B cell (primary cell): ENCODE measurements at regions of chr1 and their contacts with region 1.

Region 1: DNA sequence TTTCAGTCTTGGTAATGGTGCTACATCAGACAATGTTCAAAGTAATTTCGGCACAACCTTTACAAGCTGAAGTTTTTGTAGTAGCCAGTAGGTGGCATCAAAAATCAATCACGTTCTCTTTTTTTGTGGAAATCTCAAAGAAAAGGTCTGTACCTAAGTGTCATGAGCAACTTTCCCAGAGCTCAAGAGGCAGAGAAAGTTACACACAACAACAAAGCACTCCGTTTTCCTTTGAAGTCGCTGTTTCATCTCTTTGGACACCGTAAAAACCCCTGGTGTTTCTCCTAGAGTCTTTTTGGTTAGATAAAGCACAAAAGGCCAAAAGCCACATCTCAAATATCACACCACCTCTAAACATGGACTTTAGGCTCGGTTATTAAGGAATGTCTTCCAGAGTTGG is 131.6 kb downstream of the LHX8 start:
- DNase-seq: peak; percentile 51
- ATAC-seq: peak; percentile 69
- H3K4me3 ChIP-seq: no peak overlapping the region
- H3K4me3 Mint-ChIP-seq: no peak overlapping the region
- H3K27ac ChIP-seq: no peak overlapping the region
- H3K27ac Mint-ChIP-seq: no peak overlapping the region
- H3K4me1 ChIP-seq: peaks cover 11 to 14% of the 10 kb centered on the region in 2 donors
- H3K4me1 Mint-ChIP-seq: peaks cover 24% of the 10 kb centered on the region
- H3K27me3 ChIP-seq: no peaks in the 10 kb centered on the region
- H3K27me3 Mint-ChIP-seq: no peaks in the 10 kb centered on the region
- CTCF ChIP-seq: peak; percentile 75

Region 2: DNA sequence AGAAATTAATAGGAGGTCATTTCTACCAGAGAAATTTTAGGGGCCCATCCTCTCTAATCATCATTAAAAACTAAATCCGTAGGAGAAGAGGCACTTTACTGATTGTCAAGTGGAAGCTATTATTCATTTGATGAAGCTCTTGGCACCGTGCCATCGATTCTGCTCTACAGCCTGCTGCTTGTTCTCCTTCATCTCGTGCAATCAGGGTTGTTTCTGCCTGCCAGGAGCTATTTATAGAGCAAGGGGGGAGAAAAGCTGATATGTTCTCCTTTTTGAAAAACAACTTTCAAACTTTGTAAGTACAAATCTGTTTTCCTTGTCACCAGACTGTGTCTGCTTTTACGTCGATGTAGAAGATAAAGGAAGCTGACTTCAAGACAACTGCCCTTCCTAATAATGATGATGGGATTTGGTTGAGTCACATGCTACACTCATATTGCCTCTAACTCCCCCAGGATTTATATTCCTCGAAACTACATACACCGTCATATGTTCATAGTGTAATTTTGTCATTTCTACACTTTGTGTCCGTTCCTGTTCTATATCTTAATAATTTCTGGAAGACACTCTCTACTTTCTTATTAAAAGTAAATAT is 301.2 kb before region 1 on chr1:
- CTCF ChIA-PET with region 1: no interaction called
- POLR2A ChIA-PET with region 1: no interaction called
- intact Hi-C with region 1: no loop called
- DNase-seq: no peak
- ATAC-seq: no peak
- H3K4me3 ChIP-seq: no peak overlapping the region
- H3K4me3 Mint-ChIP-seq: no peak overlapping the region
- H3K27ac ChIP-seq: no peak overlapping the region
- H3K27ac Mint-ChIP-seq: no peak overlapping the region
- H3K4me1 ChIP-seq: no peaks in the 10 kb centered on the region
- H3K4me1 Mint-ChIP-seq: no peaks in the 10 kb centered on the region
- H3K27me3 ChIP-seq: no peaks in the 10 kb centered on the region
- H3K27me3 Mint-ChIP-seq: no peaks in the 10 kb centered on the region
- CTCF ChIP-seq: no peak

Region 3: DNA sequence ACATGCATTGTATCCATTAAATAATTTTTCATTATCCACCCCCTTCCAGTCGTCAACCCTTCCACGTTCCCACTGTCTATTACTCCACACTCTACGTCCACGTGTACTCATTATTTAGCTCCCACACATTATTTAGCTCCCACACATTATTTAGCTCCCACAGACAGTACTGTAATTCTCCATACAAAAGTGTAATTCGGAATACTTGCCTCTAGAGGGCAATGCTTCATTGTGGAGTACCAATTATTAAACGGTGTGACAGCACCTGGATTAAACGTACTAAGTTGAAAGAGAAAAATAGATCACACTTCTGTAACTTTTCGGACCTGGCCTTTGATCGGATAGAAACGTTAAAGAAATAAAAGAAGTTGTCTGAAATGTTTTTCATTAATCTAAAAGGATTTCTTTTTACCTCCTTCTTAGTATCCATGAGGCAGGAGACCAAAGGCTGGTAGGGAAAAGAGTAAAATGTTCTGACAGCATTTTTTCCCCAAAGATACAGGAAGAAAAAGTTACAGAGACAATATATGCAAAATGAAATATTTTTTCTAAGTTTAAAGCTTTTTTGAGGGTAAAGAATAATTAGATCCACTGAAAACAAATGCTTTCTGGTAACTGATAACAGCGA is 32.4 kb before region 1 on chr1:
- CTCF ChIA-PET with region 1: interaction called, 24 read pairs
- POLR2A ChIA-PET with region 1: no interaction called
- intact Hi-C with region 1: loop called (anchors 5 kb)
- DNase-seq: peak; percentile 57
- ATAC-seq: peak; percentile 69
- H3K4me3 ChIP-seq: no peak overlapping the region
- H3K4me3 Mint-ChIP-seq: no peak overlapping the region
- H3K27ac ChIP-seq: no peak overlapping the region
- H3K27ac Mint-ChIP-seq: no peak overlapping the region
- H3K4me1 ChIP-seq: no peaks in the 10 kb centered on the region
- H3K4me1 Mint-ChIP-seq: no peaks in the 10 kb centered on the region
- H3K27me3 ChIP-seq: no peaks in the 10 kb centered on the region
- H3K27me3 Mint-ChIP-seq: peaks cover 3% of the 10 kb centered on the region
- CTCF ChIP-seq: peak; percentile 85

Region 4: DNA sequence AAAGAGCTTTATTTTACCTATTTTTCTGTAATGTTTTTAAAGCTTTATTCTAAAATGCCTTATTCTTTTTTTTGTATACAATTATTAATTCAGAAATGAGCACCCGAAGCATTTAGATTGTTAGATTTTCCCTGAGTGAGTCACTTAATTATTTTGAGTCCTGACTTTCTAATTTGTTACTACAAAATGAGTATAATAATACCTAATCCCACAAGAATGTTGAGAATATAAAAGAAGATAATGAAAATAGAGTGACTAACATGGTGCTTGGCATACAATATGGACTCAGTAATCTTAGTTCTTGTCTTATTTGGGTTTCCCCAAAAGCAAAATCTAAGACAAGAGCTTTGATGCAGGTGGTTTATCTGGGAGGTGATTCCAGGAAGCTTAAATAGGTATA is 10.6 kb after region 1 on chr1:
- CTCF ChIA-PET with region 1: interaction called, 22 read pairs
- POLR2A ChIA-PET with region 1: no interaction called
- intact Hi-C with region 1: no loop called
- DNase-seq: no peak
- ATAC-seq: no peak
- H3K4me3 ChIP-seq: no peak overlapping the region
- H3K4me3 Mint-ChIP-seq: no peak overlapping the region
- H3K27ac ChIP-seq: no peak overlapping the region
- H3K27ac Mint-ChIP-seq: no peak overlapping the region
- H3K4me1 ChIP-seq: no peaks in the 10 kb centered on the region
- H3K4me1 Mint-ChIP-seq: no peaks in the 10 kb centered on the region
- H3K27me3 ChIP-seq: no peaks in the 10 kb centered on the region
- H3K27me3 Mint-ChIP-seq: no peaks in the 10 kb centered on the region
- CTCF ChIP-seq: no peak

Region 5: DNA sequence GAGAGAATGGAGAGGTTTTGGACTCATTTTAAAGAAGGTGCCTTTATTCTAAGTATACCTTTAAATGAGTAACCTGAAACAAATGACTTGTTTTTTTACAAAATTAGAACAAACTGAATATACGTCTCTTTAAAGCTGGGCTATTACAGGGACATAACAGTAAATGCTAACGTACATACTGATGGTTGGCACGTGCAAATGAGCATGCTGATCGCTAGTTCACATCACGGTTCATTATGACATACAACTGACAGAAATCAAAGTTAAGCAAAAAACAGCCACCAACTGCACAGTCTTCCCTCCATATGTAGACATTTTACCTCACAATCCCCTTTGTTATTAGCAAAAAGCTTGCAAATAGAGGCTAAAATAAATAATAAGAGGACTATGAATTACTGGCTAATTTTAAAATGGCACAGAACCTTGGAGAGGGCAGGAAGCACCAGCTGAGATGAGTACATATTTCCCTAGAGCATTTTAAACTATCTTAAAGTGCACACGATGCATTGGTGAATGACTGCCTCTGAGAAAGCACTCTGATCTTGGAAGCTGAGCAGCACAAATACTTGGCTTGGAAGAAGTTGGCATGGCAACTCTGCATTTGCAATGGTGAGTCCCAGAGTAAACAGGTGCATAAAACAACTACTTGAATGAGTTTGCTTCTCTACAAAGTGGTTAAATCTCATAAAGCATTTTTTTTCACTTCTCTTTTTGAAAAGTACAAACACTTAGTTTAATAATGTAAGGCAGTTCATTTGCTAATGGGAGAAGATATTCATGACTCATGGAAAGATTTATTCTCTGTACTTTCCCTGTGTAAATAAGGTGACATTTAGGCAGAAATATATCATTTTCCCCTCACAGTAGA is 73.1 kb after region 1 on chr1:
- CTCF ChIA-PET with region 1: interaction called, 3 read pairs
- POLR2A ChIA-PET with region 1: no interaction called
- intact Hi-C with region 1: loop called (anchors 5 kb)
- DNase-seq: peak; percentile 41
- ATAC-seq: peak; percentile 67
- H3K4me3 ChIP-seq: no peak overlapping the region
- H3K4me3 Mint-ChIP-seq: peak overlapping the region; percentile 40
- H3K27ac ChIP-seq: no peak overlapping the region
- H3K27ac Mint-ChIP-seq: peak overlapping the region; percentile 71
- H3K4me1 ChIP-seq: peaks cover 3 to 36% of the 10 kb centered on the region in 2 donors
- H3K4me1 Mint-ChIP-seq: peaks cover 34% of the 10 kb centered on the region
- H3K27me3 ChIP-seq: no peaks in the 10 kb centered on the region
- H3K27me3 Mint-ChIP-seq: no peaks in the 10 kb centered on the region
- CTCF ChIP-seq: no peak

Region 6: GRCh38 chr1:75632350-75632949 is 366.7 kb after region 1 on chr1:
- CTCF ChIA-PET with region 1: interaction called, 29 read pairs
- POLR2A ChIA-PET with region 1: no interaction called
- intact Hi-C with region 1: loop called (anchors 1 kb)
- DNase-seq: peak; percentile 29
- ATAC-seq: no peak
- H3K4me3 ChIP-seq: no peak overlapping the region
- H3K4me3 Mint-ChIP-seq: no peak overlapping the region
- H3K27ac ChIP-seq: no peak overlapping the region
- H3K27ac Mint-ChIP-seq: no peak overlapping the region
- H3K4me1 ChIP-seq: no peaks in the 10 kb centered on the region
- H3K4me1 Mint-ChIP-seq: no peaks in the 10 kb centered on the region
- H3K27me3 ChIP-seq: peaks cover 0 to 4% (median 0%) of the 10 kb centered on the region in 4 experiments
- H3K27me3 Mint-ChIP-seq: peaks cover 21% of the 10 kb centered on the region
- CTCF ChIP-seq: peak; percentile 81